RWPE1 (cell line): ENCODE measurements at regions of chr10 and their contacts with region 1.

Region 1: GRCh38 chr10:101214446-101215396 is 14.5 kb downstream of the LBX1 start:
- DNase-seq: peak; percentile 74
- H3K27ac ChIP-seq: no peak overlapping the region
- CTCF ChIP-seq: peak; percentile 90

Region 2: GRCh38 chr10:101183458-101184183 is 31.1 kb before region 1 on chr10:
- CTCF ChIA-PET with region 1: no interaction called
- POLR2A ChIA-PET with region 1: no interaction called
- DNase-seq: no peak
- H3K27ac ChIP-seq: no peak overlapping the region
- CTCF ChIP-seq: no peak

Region 3: GRCh38 chr10:101230183-101230917 is 15.6 kb after region 1 on chr10:
- CTCF ChIA-PET with region 1: interaction called, 15 read pairs
- POLR2A ChIA-PET with region 1: no interaction called
- DNase-seq: no peak
- H3K27ac ChIP-seq: no peak overlapping the region
- CTCF ChIP-seq: no peak

Region 4: GRCh38 chr10:101303087-101303703 is 88.5 kb after region 1 on chr10:
- CTCF ChIA-PET with region 1: interaction called, 14 read pairs
- POLR2A ChIA-PET with region 1: no interaction called
- DNase-seq: no peak
- H3K27ac ChIP-seq: no peak overlapping the region
- CTCF ChIP-seq: no peak

Region 5: DNA sequence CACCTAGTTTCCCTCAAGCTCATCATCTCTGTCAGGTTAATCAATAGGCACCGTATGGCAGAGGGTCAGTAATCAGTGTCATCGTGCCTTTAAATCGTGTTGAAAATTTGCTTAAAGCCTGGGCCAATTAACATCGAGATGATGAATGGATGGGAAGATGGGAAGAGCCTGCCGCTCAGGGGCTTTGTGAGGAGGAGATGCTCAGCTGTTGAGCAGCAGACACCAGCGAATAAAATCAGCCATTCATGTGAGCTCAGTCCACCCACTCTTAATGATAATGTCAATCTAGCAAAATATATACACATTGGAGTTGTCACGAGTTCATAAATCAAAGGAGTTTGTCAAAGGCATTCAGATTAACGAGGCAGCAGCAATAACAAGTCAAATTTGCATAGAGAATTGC is 236.9 kb after region 1 on chr10:
- CTCF ChIA-PET with region 1: interaction called, 11 read pairs
- POLR2A ChIA-PET with region 1: no interaction called
- DNase-seq: no peak
- H3K27ac ChIP-seq: no peak overlapping the region
- CTCF ChIP-seq: no peak

Region 6: DNA sequence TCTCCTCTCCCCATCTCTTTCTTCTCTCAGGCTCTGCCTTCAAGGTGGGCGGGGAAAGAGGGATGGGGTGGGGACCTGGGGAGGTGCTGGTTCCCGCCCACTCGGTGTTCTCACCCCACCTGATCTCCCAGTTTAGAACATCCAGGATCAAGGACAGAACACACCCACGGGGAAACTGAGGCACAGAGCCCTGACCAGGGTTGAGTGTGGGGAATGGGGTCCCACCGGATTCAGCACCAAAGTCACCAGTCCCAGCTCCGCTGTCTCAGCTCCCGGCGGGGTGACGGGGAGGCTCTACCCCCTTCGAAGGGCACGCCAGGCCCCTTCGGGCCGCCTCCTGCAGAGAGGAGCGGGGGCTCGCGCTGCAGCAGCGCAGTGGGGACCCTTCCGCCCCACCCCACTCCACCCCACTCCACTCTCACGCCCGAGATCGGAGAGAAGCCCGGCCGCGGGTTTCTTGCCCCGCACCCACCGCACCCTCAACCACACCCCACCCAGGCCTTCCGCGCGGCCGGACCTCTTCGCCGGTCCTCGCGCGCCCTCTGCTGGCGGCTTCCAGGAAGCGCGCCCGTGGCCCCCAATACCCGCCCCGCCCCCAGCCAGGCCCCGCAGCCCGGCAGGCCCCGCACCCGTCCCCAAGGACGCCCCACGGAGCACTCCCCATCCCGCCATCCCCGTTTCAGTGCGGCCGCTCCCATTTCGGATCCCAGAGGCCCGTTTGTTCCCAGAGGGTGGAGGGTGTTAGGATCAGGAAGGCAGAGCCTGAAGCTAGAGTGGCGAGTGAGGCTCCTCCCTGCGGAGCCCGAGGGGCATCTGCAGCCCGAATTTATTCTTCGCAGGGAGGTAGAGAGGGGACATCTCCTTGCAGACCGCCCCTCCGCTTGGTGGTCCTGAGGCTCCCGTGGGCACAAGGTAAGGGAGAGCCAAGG is 355.4 kb after region 1 on chr10:
- CTCF ChIA-PET with region 1: interaction called, 43 read pairs
- POLR2A ChIA-PET with region 1: no interaction called
- DNase-seq: peak; percentile 88
- H3K27ac ChIP-seq: peak overlapping the region; percentile 8
- CTCF ChIP-seq: peak; percentile 81

Region 7: DNA sequence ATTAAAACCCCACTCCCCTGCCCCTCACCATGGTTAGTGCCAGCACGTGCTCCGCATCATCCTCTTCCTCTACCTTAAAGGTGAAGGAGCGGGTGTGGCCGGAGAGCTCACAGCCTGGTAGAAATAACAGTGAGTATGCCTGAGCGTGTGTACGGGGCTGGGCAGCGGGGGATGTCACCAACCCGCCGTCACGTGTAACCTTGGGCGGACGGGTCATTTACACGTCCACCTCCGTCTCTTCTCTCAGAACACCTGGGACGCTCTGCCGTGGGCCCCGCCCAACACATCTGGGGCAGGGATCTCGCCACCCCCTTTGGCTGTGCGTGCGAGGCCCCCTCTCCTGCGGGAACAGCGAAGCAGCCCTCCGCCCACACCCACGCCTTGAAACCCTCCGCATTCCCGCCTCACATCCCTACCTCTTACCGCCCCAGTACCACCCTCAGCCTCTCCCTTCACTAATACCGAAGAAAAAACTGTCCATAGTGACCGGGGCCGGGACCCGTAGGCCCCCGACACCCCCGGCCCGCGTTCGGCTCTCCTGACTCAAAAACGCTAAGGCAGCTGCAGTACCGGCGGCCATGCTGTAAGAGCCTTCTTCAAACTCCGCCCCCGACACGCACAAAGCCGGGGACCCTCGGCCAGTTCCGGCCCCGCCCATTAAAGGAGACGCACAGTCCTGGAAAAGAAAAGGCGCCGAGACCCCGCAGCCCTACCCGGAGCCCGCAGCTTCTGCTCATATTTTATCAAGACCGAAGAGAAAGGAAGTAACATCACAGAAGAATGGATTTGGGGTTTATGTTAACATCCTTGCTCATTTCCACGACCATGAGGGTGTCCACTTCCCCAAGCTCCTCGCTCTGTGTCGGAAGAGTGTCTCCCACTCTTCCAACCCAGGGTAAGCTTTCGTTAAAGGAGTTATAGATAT is 568.4 kb after region 1 on chr10 and contains the start of gene NPM3:
- CTCF ChIA-PET with region 1: interaction called, 23 read pairs
- POLR2A ChIA-PET with region 1: no interaction called
- DNase-seq: peak; percentile 94
- H3K27ac ChIP-seq: peak within 1 kb of the TSS; percentile 73
- CTCF ChIP-seq: no peak